Left cardiac atrium (tissue), 4 donors: ENCODE measurements at regions of chr1 and their contacts with region 1.

Region 1: DNA sequence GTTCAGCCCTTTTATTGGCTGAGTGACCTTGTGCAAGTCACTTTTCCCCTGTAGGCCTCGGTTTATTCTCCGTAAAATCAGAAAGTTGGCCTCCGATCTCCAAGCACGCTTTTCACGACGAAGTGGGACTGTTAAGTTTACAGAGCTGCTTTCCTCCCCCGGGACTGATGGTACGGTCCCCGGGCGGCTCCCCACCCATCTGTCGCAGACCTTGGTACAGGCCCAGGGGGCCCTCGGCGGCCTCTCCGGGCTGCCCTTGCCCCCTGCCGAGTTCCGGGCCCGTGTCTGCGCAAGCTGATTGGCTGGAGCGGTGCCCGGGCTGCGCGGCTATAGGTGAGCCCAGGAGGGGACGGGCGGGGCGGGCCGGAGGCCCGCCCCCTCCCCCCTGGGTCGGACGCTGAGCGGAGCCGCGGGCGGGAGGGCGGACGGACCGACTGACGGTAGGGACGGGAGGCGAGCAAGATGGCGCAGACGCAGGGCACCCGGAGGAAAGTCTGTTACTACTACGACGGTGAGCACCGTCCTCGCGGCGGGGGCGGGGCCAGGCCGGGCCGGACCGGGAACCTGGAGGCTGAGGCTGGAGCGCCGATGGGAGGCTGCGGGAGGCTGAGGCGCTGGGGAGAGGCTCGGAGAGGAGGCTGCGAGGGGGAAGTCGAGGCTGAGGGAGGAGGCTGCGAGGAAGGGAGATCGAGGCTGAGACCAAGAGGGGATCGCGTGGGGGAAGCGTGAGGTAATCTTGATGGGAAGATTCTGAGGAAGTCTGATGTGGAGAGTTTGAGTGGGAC is at the start of gene HDAC1:
- DNase-seq: peak; percentile 97
- ATAC-seq: peak; percentile 99
- total RNA-seq, gene HDAC1: 34.8 to 34.9 TPM

Region 2: DNA sequence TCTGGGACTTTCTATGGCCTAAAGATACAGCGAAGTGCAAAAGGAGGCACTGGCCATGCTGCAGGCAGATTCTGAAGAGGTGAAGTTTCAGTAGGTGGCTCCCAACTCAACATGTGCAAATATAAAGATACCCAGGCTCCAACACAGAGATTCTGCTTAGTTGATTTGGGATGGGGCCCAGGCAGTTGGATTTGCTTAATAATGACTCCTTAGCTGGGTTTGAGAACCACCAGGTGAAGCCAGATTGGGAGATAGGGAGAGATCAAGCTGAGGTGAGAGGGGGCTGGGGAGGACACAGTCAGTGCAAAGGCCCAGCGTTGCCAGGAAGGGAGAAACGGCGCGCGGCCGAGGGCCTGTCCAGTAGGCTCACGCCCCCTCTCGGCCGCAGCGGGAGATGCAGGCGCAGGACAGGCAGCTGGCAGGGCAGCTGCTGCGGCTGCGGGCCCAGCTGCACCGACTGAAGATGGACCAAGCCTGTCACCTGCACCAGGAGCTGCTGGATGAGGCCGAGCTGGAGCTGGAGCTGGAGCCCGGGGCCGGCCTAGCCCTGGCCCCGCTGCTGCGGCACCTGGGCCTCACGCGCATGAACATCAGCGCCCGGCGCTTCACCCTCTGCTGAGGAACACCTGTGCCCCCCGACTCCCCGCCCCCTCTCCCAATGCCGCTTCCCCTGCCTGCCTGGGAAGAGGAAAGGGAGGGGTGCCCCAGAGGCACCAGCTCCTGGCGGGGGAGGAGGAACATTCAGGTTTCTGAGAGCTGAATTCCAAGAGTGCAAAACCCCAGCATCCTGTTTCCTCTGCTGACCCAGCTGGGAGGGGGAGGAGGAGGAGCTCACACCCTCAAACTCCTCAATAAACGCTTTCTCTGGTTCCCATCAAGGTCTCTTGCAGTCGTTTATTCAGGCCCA is 43.7 kb before region 1 on chr1:
- intact Hi-C with region 1: loop called in 1 of 2 experiments (anchors 10 kb)
- DNase-seq: peak; percentile 90
- ATAC-seq: peak; percentile 56 to 79